OCI-LY7 (cell line): ENCODE measurements at regions of chr6 and their contacts with region 1.

Region 1: GRCh38 chr6:63193324-63193723 is 17.9 kb upstream of the FKBP1C start:
- DNase-seq: no peak
- H3K4me3 ChIP-seq: no peak overlapping the region
- H3K27ac ChIP-seq: no peak overlapping the region
- H3K4me1 ChIP-seq: no peaks in the 10 kb centered on the region
- CTCF ChIP-seq: no peak

Region 2: DNA sequence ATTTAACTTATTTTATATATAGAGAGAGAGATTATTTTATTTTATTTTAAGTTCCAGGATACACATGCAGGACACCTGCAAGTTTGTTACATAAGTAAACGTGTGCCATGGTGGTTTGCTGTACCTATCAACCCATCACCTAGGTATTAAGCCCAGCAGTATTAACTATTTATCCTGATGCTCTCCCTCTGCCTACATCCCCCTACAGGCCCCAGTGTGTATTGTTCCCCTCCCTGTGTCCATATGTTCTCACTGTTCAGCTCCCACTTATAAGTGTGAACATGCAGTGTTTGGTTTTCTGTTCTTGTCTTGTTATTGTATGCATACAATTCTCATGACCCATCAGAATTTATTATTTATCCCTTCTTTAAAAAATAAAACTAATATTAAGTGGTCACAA is 52.6 kb after region 1 on chr6:
- CTCF ChIA-PET with region 1: no interaction called
- POLR2A ChIA-PET with region 1: no interaction called
- intact Hi-C with region 1: loop called (anchors 10 kb)
- DNase-seq: no peak
- H3K4me3 ChIP-seq: no peak overlapping the region
- H3K27ac ChIP-seq: no peak overlapping the region
- H3K4me1 ChIP-seq: no peaks in the 10 kb centered on the region
- CTCF ChIP-seq: peak; percentile 57